ENCODE measurements at regions of chr14 and their contacts with region 1.

Region 1: GRCh38 chr14:24734878-24735500 is 101.0 kb upstream of the GZMB start:
- DNase-seq: no peak
- H3K4me3 ChIP-seq: no peak overlapping the region
- H3K27ac ChIP-seq: no peak overlapping the region
- H3K4me1 ChIP-seq: peaks cover 3% of the 10 kb centered on the region
- H3K27me3 ChIP-seq: no peaks in the 10 kb centered on the region
- CTCF ChIP-seq: peak; percentile 86

Region 2: GRCh38 chr14:24665440-24665991 is 69.5 kb before region 1 on chr14:
- intact Hi-C with region 1: no loop called
- DNase-seq: no peak
- H3K4me3 ChIP-seq: no peak overlapping the region
- H3K27ac ChIP-seq: no peak overlapping the region
- H3K4me1 ChIP-seq: peaks cover 5% of the 10 kb centered on the region
- H3K27me3 ChIP-seq: peaks cover 6% of the 10 kb centered on the region
- CTCF ChIP-seq: no peak

Region 3: DNA sequence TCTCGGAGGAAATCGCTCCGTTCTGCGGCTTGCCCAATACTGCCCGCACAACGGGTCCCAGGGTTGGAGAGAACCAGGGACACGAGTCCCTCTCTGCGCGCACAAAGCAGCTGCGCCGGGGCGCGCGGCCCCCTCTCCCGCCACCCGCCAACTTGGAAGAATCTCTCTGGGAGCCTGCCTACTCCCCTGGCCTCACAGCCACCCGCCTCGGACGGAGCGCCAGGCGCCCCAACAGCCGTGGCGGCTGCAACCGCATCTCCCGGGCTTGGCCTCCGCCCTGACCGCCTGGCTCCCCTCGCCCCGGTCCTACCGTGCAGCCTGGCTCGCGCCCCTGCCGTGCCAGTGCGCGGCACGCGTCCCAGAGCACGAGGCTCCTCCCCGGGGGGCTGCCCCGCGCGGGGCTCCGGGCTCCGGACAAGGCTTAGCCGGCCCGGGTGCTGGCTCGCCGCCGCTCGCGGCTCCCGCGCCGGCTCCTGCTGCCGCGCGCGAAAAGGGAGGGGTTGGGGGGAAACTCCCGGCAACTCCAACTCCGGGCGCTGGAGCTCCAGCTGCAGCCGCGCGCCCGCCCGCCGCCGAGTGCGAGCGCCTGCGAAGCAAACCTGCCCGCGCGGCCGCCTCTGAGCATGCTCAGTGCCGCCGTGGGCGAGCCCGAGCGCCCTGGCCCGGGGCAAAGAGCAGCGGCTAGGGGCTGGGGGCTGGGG is 314.7 kb after region 1 on chr14 and contains the start of gene STXBP6:
- intact Hi-C with region 1: loop called (anchors 10 kb)
- DNase-seq: peak; percentile 84
- H3K4me3 ChIP-seq: peak within 1 kb of the TSS; percentile 83
- H3K27ac ChIP-seq: peak within 1 kb of the TSS; percentile 96
- H3K4me1 ChIP-seq: peaks cover 64% of the 10 kb centered on the region
- H3K27me3 ChIP-seq: no peaks in the 10 kb centered on the region
- CTCF ChIP-seq: peak; percentile 22
- total RNA-seq, gene STXBP6: 21.7 TPM

Region 4: DNA sequence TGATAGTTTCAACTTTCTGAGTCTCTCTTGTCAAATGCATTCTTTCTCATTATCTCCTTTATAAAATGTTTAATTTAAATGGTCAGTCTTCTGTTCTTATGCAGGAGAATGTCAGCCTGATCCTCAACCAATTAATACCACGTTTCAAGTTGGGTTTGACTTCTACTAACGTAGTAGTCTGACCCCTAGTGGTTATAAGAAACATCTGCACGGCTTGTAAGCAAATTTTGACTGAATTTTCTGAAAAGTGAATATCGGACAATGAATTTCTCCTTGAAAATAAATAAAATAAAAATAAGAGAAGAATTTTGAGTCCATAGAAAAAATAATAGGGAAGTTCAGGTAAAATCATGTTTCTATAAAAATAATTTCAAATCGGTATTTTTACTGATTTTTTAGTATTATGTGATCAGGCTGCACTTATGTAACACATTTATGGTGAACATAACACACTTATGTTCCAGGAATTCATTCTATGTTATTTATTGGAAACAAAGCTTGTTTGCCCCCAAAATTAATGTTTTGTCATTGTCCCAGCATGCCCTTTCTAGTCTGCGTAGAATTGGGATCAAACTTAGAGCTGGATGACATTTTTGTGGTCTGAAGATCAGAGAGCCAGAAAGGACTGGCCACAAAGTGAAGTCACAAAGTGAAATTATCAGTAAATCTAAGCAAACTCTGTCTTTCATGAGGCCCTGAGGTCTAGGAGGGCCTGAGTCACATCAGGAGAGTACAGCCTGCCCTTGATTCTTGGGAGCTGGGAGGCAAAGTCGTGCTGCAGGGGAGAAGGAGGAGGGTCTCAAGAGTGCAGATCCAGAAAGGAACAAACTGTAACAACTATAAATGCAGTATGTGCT is 416.2 kb after region 1 on chr14:
- intact Hi-C with region 1: loop called (anchors 5 kb)
- DNase-seq: no peak
- H3K4me3 ChIP-seq: no peak overlapping the region
- H3K27ac ChIP-seq: no peak overlapping the region
- H3K4me1 ChIP-seq: no peaks in the 10 kb centered on the region
- H3K27me3 ChIP-seq: no peaks in the 10 kb centered on the region
- CTCF ChIP-seq: peak; percentile 86

Measured in left ventricle myocardium inferior (tissue), 1 donor.